Panc1 (cell line): ENCODE measurements at regions of chr13 and their contacts with region 1.

Region 1: GRCh38 chr13:23386533-23386932 is 47.0 kb downstream of the SACS start:
- DNase-seq: no peak
- ATAC-seq: no peak
- H3K4me3 ChIP-seq: no peak overlapping the region
- H3K27ac ChIP-seq: no peak overlapping the region
- H3K4me1 ChIP-seq: no peaks in the 10 kb centered on the region
- H3K27me3 ChIP-seq: no peaks in the 10 kb centered on the region
- CTCF ChIP-seq: no peak

Region 2: GRCh38 chr13:23411706-23412105 is 25.2 kb after region 1 on chr13:
- CTCF ChIA-PET with region 1: no interaction called
- POLR2A ChIA-PET with region 1: interaction called, 24 read pairs
- in situ Hi-C with region 1: no loop called
- intact Hi-C with region 1: no loop called
- DNase-seq: no peak
- ATAC-seq: no peak
- H3K4me3 ChIP-seq: no peak overlapping the region
- H3K27ac ChIP-seq: no peak overlapping the region
- H3K4me1 ChIP-seq: no peaks in the 10 kb centered on the region
- H3K27me3 ChIP-seq: no peaks in the 10 kb centered on the region
- CTCF ChIP-seq: no peak

Region 3: GRCh38 chr13:23599083-23599925 is 212.8 kb after region 1 on chr13:
- CTCF ChIA-PET with region 1: no interaction called
- POLR2A ChIA-PET with region 1: no interaction called
- in situ Hi-C with region 1: no loop called
- intact Hi-C with region 1: no loop called
- DNase-seq: no peak
- ATAC-seq: no peak
- H3K4me3 ChIP-seq: no peak overlapping the region
- H3K27ac ChIP-seq: no peak overlapping the region
- H3K4me1 ChIP-seq: no peaks in the 10 kb centered on the region
- H3K27me3 ChIP-seq: no peaks in the 10 kb centered on the region; the same call in 1 of the 2 replicates
- CTCF ChIP-seq: no peak